HEK293T (cell line): ENCODE measurements at regions of chr6 and their contacts with region 1.

Region 1: DNA sequence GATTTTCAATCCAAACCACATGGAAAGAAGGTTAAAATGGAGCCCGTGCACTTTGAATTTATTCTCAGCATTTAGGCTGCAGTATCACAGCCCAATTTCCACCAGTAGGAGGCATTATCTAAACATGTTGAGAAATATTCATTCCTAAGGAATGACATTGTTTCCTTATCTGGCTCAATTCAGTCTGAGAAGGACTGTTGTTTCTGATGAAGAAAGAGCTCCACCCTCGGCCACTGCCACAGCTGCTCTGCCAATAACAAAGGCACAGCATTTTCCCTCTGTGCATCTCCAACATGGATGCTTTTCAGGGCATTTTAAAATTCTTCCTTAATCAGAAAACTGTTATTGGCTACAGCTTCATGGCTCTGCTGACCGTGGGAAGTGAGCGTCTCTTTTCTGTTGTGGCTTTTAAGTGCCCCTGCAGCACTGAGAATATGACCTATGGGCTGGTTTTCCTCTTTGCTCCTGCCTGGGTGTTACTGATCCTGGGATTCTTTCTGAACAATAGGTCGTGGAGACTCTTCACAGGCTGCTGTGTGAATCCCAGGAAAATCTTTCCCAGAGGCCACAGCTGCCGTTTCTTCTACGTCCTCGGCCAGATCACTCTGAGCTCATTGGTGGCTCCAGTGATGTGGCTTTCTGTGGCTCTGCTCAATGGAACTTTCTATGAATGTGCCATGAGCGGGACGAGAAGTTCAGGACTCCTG is at the start of gene CALHM5:
- DNase-seq: peak; percentile 65

Region 2: DNA sequence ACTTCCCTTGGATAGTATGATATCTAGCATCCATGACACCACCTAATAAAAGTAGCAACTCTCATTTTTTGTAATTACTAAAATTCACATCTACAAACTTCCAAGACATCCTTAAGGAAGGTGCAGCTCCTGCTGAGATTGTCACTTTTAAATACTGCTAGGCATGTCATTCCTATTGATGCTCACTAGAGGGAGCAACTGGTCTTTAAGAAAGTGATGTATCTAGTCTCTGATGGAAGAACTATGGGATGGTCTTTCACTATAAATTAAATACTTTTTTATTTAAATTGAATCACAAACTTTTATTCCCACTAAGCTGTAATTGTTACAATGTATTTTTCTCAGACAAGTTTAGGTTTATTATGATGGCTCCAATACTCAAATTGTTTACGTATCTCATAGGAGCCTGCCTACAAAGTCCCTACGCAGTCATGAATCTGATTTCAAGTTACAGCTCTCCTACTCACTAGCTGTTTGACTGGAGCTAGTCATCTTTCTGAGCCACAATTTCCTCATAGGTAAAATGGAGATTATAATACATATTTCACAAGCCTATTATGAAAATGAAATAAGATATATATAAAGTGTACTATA is 223.8 kb before region 1 on chr6:
- CTCF ChIA-PET with region 1: interaction called, 10 read pairs
- POLR2A ChIA-PET with region 1: interaction called, 4 read pairs
- DNase-seq: peak; percentile 42

Region 3: DNA sequence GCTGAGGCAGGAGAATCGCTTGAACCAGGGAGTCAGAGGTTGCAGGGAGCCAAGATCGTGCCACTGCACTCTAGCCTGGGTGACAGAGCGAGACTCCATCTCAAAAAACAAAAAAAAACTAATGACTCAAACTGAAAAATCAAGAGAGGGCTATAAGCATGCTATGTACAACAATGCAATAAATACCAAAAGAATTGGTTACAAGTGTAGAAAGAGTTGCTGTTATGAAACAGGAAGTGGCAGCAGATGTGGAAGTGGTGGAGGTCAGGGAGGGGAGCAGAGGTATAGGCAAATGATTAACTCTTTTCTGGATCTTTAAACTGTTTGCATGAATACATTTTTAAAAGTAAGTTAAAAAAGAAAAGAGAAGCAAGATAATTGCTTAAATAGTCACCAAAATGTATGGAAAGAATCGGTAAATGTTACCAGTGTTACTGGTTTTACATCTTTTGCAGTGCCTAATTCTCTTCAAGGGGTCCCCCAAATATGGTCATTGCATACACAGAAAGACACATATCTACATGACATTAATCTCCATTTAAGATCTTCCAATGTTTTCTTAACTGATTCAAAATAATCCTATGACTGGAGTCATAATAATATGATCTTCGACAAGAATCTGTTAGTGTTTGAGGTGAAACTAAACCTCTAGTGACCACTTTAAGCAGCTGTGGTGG is 35.4 kb before region 1 on chr6:
- CTCF ChIA-PET with region 1: no interaction called
- POLR2A ChIA-PET with region 1: no interaction called
- DNase-seq: no peak

Region 4: GRCh38 chr6:116500969-116501433 is 10.6 kb before region 1 on chr6:
- CTCF ChIA-PET with region 1: interaction called, 14 read pairs
- POLR2A ChIA-PET with region 1: interaction called, 4 read pairs
- DNase-seq: no peak

Region 5: DNA sequence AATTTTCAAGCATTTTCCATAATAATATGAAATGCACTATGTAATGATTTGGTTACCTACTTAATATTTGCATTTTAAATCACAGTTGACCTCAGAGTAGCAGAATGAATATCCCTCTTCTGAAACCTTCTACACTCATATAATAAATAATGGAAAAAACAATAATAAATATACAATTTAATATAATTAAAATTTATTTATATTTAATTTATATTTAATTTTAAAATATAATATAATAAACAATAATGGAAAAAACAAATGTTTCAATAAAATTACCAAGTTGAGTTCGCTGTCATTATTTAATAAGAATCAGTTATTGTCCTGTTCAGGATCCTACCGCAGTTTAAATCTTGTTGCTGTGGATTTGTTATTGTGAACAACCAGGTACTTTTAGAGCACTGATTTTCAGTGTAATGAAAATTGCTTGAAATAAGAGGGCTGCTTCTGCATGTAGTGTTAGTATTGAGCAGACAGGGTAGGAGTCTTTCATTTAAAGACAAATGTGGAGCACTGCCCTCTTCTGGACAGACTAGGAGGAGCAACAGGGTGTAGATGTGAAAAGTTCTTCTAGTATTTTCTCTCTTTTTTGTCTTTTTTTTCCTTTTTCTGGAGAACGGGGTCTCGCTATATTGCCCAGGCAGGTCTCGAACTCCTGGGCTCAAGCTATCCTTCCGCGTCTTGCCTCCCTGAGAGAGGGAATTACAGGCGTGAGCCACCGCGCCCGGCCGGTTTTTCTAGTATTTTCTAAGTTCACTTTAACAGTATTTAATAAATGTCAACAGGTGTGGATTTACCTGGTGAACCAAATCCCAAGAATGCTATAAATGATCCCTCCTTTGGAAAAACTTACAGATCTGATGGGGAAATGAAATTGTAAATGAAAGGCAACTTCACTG is 20.4 kb after region 1 on chr6:
- CTCF ChIA-PET with region 1: interaction called, 18 read pairs
- POLR2A ChIA-PET with region 1: interaction called, 4 read pairs
- DNase-seq: peak; percentile 64

Region 6: DNA sequence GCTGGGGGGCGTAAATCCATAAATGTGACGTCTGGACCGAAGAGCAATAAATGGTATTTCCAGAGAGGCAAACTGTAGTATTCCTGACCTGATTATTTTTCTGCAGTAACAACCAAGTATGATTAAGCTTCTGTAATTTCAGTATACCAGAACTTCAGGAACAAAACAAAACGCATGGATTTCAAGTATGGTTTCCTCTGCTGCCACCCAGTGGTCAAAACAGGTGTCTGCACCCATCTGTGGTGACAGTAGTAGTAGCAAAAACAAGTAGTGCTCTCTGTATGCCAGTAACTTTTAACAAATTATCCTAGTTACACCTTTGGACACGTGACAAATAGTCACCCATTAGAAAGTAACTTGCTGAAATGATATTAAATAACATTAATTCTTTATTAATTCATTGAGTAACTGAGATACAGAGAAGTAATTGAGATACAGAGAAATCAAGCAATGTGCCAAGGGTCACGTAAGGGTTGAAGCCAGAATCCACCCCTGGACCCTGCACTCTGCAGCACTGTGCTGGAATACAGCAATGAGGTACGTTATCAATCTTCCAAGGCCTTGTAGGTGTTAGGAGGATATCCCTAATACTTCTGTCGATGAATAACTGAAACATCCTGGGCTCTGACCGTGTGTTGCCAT is 49.9 kb after region 1 on chr6:
- CTCF ChIA-PET with region 1: interaction called, 10 read pairs
- POLR2A ChIA-PET with region 1: interaction called, 5 read pairs
- DNase-seq: peak; percentile 73

Region 7: GRCh38 chr6:116570856-116571682 is 59.5 kb after region 1 on chr6 and contains the start of gene RWDD1:
- CTCF ChIA-PET with region 1: interaction called, 3 read pairs
- POLR2A ChIA-PET with region 1: interaction called, 17 read pairs
- DNase-seq: peak; percentile 98